Pancreas (tissue), 10 donors: ENCODE measurements at regions of chr3 and their contacts with region 1.

Region 1: DNA sequence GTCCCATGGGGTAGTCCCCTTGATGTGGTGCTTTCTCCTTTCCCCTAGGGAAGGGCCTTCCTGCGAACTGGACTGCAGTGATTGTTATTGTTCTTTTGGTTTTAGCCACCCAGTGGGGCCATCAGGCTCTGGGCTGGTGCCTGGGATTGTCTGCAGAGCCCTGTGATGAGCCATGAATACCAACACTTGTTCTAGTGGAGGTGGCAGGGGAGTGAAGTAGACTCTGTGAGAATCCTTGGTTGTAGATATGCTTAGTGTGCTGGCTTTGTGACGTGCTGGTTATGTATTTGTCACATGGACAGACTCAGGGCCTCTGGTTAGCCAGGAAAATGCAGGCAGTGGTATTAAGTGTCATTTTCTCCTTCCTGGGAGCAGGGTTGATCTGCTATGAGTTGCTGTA is 51.8 kb upstream of the NDUFB4 start:
- DNase-seq: no peak
- ATAC-seq: no peak
- H3K4me3 ChIP-seq: no peak overlapping the region
- H3K27ac ChIP-seq: no peak overlapping the region
- H3K4me1 ChIP-seq: no peaks in the 10 kb centered on the region
- H3K27me3 ChIP-seq: no peaks in the 10 kb centered on the region
- CTCF ChIP-seq: no peak

Region 2: DNA sequence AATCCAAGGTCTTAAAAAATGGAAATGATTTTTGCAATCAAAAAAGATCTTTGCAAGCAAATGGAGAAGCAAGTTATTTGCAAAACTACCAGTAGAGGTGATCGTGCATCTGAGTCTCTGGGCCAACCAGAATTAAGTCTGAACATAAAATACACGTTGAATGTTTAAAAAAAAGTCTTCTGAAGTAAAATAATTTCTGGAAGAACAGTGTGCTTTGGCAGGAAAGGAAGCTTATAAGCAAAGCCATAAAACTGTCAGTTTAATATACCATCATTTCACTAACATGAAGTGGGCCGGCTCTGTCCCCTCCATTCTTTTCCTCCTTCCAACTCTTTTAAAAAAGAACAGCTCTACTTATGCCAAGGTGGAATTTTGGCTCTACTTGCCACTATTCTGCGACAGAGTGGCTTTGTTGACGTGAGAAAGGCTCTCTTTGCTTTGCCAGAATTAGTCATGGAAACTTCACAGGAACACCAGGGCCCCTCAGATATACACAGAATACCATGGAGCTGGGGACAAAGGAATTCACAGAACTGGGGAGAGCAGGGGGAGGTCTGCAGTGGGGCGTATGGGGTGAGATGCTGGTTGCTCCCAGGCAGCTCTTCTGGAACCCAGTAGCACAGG is 123.3 kb before region 1 on chr3:
- intact Hi-C with region 1: loop called in 1 of 3 experiments (anchors 10 kb)
- DNase-seq: no peak
- ATAC-seq: no peak
- H3K4me3 ChIP-seq: no peak overlapping the region
- H3K27ac ChIP-seq: peak overlapping the region in 3 of 4 donors; percentile 34 to 59 (median 40)
- H3K4me1 ChIP-seq: peaks cover 0 to 7% (median 0%) of the 10 kb centered on the region in 3 donors
- H3K27me3 ChIP-seq: no peaks in the 10 kb centered on the region
- CTCF ChIP-seq: no peak

Region 3: GRCh38 chr3:120469447-120469846 is 74.9 kb before region 1 on chr3:
- intact Hi-C with region 1: no loop called
- DNase-seq: no peak
- ATAC-seq: peak in 1 of 4 donors; percentile 66
- H3K4me3 ChIP-seq: no peak overlapping the region
- H3K27ac ChIP-seq: no peak overlapping the region
- H3K4me1 ChIP-seq: no peaks in the 10 kb centered on the region
- H3K27me3 ChIP-seq: no peaks in the 10 kb centered on the region
- CTCF ChIP-seq: no peak

Region 4: DNA sequence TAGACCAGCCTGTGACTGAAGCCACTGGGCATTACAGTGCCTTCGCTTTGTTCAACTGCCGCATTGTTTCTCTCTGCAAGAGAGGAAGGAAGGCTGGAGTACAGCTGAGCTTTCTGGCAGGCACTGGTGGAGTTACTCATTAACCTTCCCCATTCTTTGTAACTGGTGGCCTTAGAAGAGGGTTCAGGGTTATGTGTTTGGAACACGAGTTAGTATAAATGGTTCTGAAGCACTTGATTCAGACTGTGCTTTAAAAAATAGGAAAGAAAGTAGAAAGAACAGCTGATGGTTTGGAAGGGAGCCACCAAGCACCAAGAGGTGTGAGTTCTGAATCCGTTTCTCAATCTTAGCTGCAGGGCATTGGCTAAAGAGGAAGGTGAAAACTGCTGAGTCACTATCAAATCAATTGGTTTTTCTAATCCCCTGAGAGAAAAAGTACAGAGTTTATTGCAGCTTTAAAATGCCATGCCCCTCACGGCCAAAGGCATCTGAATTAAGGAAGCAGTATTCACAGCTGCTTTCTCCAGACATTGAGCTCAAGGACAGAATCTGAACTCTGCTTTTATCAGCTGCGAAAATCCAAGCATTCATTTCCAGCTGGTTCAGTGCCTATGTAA is 134.1 kb after region 1 on chr3:
- intact Hi-C with region 1: no loop called
- DNase-seq: peak in 5 of 6 donors; percentile 39 to 90 (median 87)
- ATAC-seq: peak; percentile 83 to 90 (median 88)
- H3K4me3 ChIP-seq: peak overlapping the region in 2 of 4 donors; percentile 20 to 43
- H3K27ac ChIP-seq: peak overlapping the region; percentile 3 to 81 (median 62)
- H3K4me1 ChIP-seq: peaks cover 25 to 44% (median 39%) of the 10 kb centered on the region in 3 donors
- H3K27me3 ChIP-seq: no peaks in the 10 kb centered on the region
- CTCF ChIP-seq: no peak